ENCODE measurements at regions of chr16 and their contacts with region 1.

Region 1: GRCh38 chr16:12413393-12413792 is 390.3 kb downstream of the CPPED1 start:
- DNase-seq: no peak
- ATAC-seq: no peak
- H3K4me3 ChIP-seq: no peak overlapping the region
- H3K27ac ChIP-seq: no peak overlapping the region
- H3K4me1 ChIP-seq: no peaks in the 10 kb centered on the region
- H3K27me3 ChIP-seq: no peaks in the 10 kb centered on the region
- CTCF ChIP-seq: no peak

Region 2: GRCh38 chr16:12375046-12375740 is 38.2 kb before region 1 on chr16:
- CTCF ChIA-PET with region 1: no interaction called
- POLR2A ChIA-PET with region 1: no interaction called
- in situ Hi-C with region 1: no loop called
- intact Hi-C with region 1: no loop called
- DNase-seq: no peak
- ATAC-seq: no peak
- H3K4me3 ChIP-seq: no peak overlapping the region
- H3K27ac ChIP-seq: no peak overlapping the region
- H3K4me1 ChIP-seq: no peaks in the 10 kb centered on the region
- H3K27me3 ChIP-seq: no peaks in the 10 kb centered on the region
- CTCF ChIP-seq: no peak

Region 3: DNA sequence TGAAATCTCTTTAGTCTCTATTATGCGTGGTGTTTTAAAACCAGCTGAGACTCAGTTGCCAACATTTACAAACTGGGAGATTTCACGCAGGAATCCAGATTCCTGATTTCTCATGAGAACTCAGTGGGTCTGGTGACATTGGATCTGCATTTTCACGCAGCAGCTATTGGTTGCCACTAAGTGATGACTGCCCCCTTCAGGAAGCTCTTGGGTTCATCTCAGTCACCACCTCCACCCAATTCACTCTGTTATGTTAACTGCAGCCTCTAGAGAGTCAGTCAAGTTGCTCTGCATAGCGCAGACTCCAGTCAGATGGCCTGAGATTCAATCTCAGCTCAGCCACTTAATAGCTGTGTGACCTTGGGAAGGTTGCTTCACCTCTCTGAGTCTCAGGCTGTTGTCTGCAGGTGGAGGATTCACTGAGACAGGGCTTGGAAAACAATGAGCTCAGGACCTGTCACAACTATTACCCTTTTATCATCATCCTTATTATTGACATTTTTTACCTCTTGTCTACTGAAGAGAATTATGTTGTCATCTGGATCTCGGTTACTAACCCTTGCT is 494.4 kb after region 1 on chr16:
- CTCF ChIA-PET with region 1: no interaction called
- POLR2A ChIA-PET with region 1: no interaction called
- in situ Hi-C with region 1: no loop called
- intact Hi-C with region 1: no loop called
- DNase-seq: no peak
- ATAC-seq: no peak; the same call in 1 of the 2 replicates
- H3K4me3 ChIP-seq: no peak overlapping the region
- H3K27ac ChIP-seq: no peak overlapping the region
- H3K4me1 ChIP-seq: no peaks in the 10 kb centered on the region; the same call in 1 of the 2 replicates
- H3K27me3 ChIP-seq: peaks cover 7% of the 10 kb centered on the region; the same call in 1 of the 2 replicates
- CTCF ChIP-seq: no peak; the same call in 1 of the 2 replicates

Region 4: GRCh38 chr16:14196539-14196938 is 1783.1 kb after region 1 on chr16:
- CTCF ChIA-PET with region 1: no interaction called
- POLR2A ChIA-PET with region 1: interaction called, 10 read pairs
- in situ Hi-C with region 1: no loop called
- intact Hi-C with region 1: no loop called
- DNase-seq: no peak
- ATAC-seq: no peak
- H3K4me3 ChIP-seq: no peak overlapping the region
- H3K27ac ChIP-seq: no peak overlapping the region
- H3K4me1 ChIP-seq: peaks cover 6% of the 10 kb centered on the region; the same call in 1 of the 2 replicates
- H3K27me3 ChIP-seq: no peaks in the 10 kb centered on the region
- CTCF ChIP-seq: no peak